PC-9 (cell line): ENCODE measurements at regions of chr9 and their contacts with region 1.

Region 1: DNA sequence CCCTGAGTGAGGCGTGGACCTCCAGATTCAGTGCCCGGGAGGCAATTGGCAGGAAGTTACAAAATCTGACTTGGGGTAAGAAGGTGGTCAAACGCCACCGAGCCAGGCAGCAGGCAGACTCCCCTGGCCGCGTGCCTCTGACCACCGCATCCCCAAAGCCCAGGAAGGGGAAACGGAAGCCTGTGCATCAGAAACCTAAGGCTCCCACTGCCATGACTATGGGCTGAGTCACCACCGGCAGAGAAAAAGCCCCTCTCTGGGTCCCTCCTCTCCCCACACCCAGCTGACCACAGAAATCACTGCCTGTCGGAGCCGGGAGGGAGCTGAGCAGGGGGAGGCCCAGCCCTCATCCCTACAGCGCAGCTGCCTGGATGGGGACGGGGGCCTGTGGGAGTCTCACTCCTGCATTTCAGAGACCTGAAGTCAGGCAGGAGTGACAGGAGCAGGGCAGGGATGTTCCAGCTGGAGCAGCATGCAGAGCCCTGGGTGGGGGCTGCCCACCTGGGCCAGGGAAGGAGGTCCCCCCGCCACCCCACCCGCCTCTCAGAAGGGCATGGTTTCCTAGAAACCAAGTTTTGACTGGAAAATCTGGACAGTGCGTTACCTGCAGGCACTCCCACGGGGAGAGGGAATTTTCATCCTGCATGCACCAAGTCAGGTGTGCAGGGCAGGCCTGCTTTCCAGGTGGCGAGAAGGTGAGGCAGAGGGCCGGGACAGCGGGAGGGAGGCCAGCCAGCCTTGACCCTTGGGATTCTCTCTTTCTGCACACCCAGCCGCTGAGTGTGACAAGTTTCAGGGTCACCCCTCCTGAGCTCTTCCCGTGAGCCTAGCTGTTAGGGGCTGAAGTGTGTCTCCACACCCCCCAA is 68.2 kb downstream of the LRSAM1 start:
- DNase-seq: peak; percentile 92 to 96
- H3K4me3 ChIP-seq: no peak overlapping the region
- H3K27ac ChIP-seq: peak overlapping the region; percentile 86
- H3K4me1 ChIP-seq: peaks cover 54% of the 10 kb centered on the region
- H3K27me3 ChIP-seq: no peaks in the 10 kb centered on the region
- CTCF ChIP-seq: no peak

Region 2: GRCh38 chr9:127537792-127538191 is 18.3 kb after region 1 on chr9:
- CTCF ChIA-PET with region 1: no interaction called
- POLR2A ChIA-PET with region 1: interaction called, 14 read pairs
- intact Hi-C with region 1: loop called (anchors 1 kb)
- DNase-seq: no peak
- H3K4me3 ChIP-seq: no peak overlapping the region
- H3K27ac ChIP-seq: 0 out of 2 replicates have a peak overlapping the region, but pooled peaks have one; percentile 12
- H3K4me1 ChIP-seq: peaks cover 22% of the 10 kb centered on the region
- H3K27me3 ChIP-seq: no peaks in the 10 kb centered on the region
- CTCF ChIP-seq: 0 out of 2 replicates have a peak, but pooled peaks have one; percentile 27

Region 3: GRCh38 chr9:127555768-127556397 is 36.3 kb after region 1 on chr9:
- CTCF ChIA-PET with region 1: no interaction called
- POLR2A ChIA-PET with region 1: interaction called, 5 read pairs
- intact Hi-C with region 1: loop called (anchors 1 kb)
- DNase-seq: peak; percentile 94
- H3K4me3 ChIP-seq: no peak overlapping the region
- H3K27ac ChIP-seq: peak overlapping the region; percentile 74
- H3K4me1 ChIP-seq: peaks cover 69% of the 10 kb centered on the region
- H3K27me3 ChIP-seq: no peaks in the 10 kb centered on the region
- CTCF ChIP-seq: no peak

Region 4: DNA sequence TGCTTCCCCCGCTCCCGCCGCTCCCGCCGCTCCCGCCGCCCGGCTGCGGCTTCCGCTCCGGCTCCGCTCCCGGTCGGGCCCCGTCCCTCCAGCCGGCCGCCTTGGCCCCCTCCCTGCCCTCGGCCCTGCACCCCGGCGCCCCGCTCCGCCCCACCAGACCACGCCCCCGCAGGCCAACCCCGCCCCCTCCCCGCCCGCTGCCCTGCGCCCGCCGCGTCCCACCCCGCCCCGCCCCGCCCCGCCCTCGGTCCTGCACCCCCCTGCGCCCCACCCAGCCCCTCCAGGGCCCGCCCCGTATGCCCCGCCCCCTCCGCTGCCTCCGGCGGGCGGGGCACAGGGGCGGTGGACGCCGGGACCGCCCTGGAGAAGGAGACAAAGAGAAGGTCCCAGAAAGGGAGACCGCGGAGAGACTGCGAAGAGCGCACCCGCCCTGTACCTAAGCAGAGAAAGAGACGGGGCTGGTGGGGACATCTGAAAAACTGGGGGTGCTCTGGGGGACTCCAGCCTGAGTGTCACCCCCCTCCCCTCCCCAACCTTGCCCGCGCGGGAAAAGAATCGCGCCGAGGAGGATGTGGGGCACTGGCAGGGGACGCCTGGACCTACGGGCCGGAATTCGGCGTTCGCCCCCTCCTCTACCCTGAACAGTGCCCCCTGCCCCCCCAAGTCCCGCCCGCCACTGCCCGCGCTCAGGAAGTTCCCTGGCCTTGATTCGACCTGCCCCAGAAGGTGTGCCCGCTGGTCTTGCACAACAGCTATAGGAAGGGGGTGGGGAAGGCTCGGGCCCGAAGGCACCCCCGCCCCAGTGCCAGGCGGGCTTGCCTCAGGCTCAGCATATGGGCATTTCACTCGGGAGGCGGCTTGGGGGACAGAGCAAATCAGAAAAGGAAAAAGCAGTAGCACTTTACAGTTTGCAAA is 49.7 kb after region 1 on chr9:
- CTCF ChIA-PET with region 1: interaction called, 7 read pairs
- POLR2A ChIA-PET with region 1: interaction called, 10 read pairs
- intact Hi-C with region 1: loop called (anchors 1 kb)
- DNase-seq: peak; percentile 67 to 88
- H3K4me3 ChIP-seq: peak overlapping the region; percentile 87
- H3K27ac ChIP-seq: peak overlapping the region; percentile 93
- H3K4me1 ChIP-seq: peaks cover 76% of the 10 kb centered on the region
- H3K27me3 ChIP-seq: no peaks in the 10 kb centered on the region
- CTCF ChIP-seq: no peak

Region 5: DNA sequence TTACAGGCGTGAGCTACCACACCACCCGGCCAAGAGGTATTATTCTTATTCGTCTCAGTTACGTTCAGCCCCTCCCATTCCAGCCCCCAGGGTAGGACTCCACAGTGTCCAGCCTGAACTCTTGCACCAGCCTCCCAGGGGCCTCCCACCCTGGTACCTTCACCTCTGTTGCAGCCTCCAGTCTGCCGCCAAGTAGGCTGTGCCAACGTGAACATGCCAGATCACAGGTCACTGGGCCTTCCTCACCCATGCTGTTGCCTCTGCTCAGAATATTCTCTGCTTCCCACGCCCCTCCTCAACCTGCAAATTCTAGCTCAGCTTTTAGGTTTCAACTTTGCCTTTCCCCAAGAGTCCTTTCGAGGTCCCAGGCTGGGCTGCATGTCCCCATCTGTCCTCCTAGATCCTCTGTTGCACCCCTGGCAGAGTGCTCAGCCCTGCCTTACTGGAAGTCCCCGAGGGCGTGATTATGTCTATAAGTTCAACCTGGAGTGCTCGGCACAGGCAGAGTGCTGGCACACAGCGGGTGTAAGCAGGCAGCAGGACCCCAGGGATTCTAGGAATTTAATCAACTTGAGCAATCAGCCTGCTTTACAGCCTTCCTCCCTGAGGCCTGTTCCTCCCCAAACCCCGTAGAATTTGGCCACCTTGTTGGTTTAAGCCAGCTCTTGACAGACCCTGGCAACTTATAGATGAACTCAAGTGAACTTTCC is 79.5 kb after region 1 on chr9:
- CTCF ChIA-PET with region 1: no interaction called
- POLR2A ChIA-PET with region 1: interaction called, 23 read pairs
- intact Hi-C with region 1: no loop called
- DNase-seq: peak; percentile 26 to 48
- H3K4me3 ChIP-seq: no peak overlapping the region
- H3K27ac ChIP-seq: no peak overlapping the region
- H3K4me1 ChIP-seq: peaks cover 13% of the 10 kb centered on the region
- H3K27me3 ChIP-seq: no peaks in the 10 kb centered on the region
- CTCF ChIP-seq: no peak

Region 6: GRCh38 chr9:128249908-128250838 is 730.6 kb after region 1 on chr9:
- CTCF ChIA-PET with region 1: no interaction called
- POLR2A ChIA-PET with region 1: no interaction called
- intact Hi-C with region 1: no loop called
- DNase-seq: peak in 1 of 2 experiments; percentile 44
- H3K4me3 ChIP-seq: no peak overlapping the region
- H3K27ac ChIP-seq: no peak overlapping the region
- H3K4me1 ChIP-seq: no peaks in the 10 kb centered on the region
- H3K27me3 ChIP-seq: no peaks in the 10 kb centered on the region
- CTCF ChIP-seq: no peak